ENCODE measurements at regions of chr2 and their contacts with region 1.

Region 1: DNA sequence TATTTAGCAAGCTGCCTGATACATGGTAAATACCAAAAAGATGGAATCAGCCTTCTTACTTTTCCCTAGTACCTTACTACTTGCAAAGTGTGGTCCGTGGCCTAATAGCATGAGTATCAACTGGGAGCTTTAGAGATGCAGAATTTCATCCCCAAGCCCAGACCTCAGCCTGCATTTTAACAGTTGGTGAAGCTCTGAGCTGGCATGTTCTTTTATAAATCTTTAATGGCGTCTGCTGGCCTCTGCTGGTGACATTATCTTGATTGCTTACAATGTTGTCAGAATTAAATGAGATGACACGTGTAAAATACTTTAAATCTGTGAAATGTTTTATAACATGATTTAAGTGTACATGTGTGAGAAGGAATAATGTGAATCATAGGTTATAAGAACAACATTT is 115.1 kb upstream of the NOSTRIN start:
- DNase-seq: peak; percentile 13
- H3K4me3 Mint-ChIP-seq: no peak overlapping the region
- H3K27ac Mint-ChIP-seq: no peak overlapping the region
- H3K4me1 Mint-ChIP-seq: no peaks in the 10 kb centered on the region
- H3K27me3 Mint-ChIP-seq: no peaks in the 10 kb centered on the region
- CTCF ChIP-seq: no peak

Region 2: DNA sequence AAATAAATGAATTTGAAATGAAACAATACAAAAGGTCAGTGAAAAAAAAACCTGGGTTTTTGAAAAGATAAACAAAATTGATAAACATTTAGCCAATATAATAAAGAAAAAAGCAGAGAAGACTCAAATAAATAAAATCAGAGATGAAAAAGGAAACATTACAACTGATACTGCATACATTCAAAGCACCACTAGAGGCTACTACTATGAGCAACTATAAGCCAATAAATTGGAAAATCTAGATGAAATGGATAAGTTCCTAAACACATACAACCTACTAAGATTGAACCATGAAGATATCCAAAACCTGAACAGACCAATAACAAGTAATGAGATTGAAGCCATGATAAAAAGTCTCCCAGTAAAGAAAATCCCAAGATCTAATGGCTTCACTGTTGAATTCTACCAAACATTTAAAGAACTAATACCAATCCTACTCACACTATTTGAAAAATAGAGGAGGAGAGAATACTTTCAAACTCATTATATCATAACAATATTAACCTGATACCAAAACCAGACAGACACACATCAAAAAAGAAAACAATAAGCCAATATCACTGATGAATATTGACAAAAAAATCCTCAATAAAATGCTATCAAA is 312.0 kb before region 1 on chr2:
- CTCF ChIA-PET with region 1: no interaction called
- intact Hi-C with region 1: loop called (anchors 5 kb)
- DNase-seq: no peak
- H3K4me3 Mint-ChIP-seq: no peak overlapping the region
- H3K27ac Mint-ChIP-seq: no peak overlapping the region
- H3K4me1 Mint-ChIP-seq: no peaks in the 10 kb centered on the region
- H3K27me3 Mint-ChIP-seq: no peaks in the 10 kb centered on the region
- CTCF ChIP-seq: no peak

Region 3: DNA sequence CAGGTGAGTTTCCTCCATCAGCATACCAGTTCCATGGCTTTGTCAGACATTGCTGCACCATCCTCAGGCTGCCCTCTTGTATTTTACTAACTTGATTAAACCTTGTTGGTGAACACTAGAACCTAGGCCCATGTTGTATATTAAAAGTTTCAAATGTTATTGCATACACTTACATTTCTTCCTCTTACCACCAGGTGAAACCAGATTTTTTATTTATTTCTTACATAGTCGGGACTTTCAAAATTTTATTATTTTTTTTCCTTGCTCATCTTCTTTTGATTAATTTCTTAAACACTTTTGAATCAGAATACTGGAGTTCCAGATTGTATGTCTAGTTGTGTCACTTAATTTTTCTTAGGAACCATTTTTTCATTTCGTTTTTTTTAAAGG is 225.4 kb before region 1 on chr2:
- CTCF ChIA-PET with region 1: no interaction called
- intact Hi-C with region 1: loop called (anchors 5 kb)
- DNase-seq: no peak
- H3K4me3 Mint-ChIP-seq: no peak overlapping the region
- H3K27ac Mint-ChIP-seq: no peak overlapping the region
- H3K4me1 Mint-ChIP-seq: peaks cover 39% of the 10 kb centered on the region
- H3K27me3 Mint-ChIP-seq: no peaks in the 10 kb centered on the region
- CTCF ChIP-seq: no peak

Region 4: GRCh38 chr2:168705534-168706470 is 18.5 kb after region 1 on chr2:
- CTCF ChIA-PET with region 1: no interaction called
- intact Hi-C with region 1: no loop called
- DNase-seq: no peak
- H3K4me3 Mint-ChIP-seq: no peak overlapping the region
- H3K27ac Mint-ChIP-seq: no peak overlapping the region
- H3K4me1 Mint-ChIP-seq: peaks cover 17% of the 10 kb centered on the region
- H3K27me3 Mint-ChIP-seq: no peaks in the 10 kb centered on the region
- CTCF ChIP-seq: no peak

Region 5: GRCh38 chr2:168758970-168759820 is 71.9 kb after region 1 on chr2:
- CTCF ChIA-PET with region 1: no interaction called
- intact Hi-C with region 1: no loop called
- DNase-seq: peak; percentile 37
- H3K4me3 Mint-ChIP-seq: no peak overlapping the region
- H3K27ac Mint-ChIP-seq: no peak overlapping the region
- H3K4me1 Mint-ChIP-seq: peaks cover 8% of the 10 kb centered on the region
- H3K27me3 Mint-ChIP-seq: no peaks in the 10 kb centered on the region
- CTCF ChIP-seq: peak; percentile 49

Region 6: DNA sequence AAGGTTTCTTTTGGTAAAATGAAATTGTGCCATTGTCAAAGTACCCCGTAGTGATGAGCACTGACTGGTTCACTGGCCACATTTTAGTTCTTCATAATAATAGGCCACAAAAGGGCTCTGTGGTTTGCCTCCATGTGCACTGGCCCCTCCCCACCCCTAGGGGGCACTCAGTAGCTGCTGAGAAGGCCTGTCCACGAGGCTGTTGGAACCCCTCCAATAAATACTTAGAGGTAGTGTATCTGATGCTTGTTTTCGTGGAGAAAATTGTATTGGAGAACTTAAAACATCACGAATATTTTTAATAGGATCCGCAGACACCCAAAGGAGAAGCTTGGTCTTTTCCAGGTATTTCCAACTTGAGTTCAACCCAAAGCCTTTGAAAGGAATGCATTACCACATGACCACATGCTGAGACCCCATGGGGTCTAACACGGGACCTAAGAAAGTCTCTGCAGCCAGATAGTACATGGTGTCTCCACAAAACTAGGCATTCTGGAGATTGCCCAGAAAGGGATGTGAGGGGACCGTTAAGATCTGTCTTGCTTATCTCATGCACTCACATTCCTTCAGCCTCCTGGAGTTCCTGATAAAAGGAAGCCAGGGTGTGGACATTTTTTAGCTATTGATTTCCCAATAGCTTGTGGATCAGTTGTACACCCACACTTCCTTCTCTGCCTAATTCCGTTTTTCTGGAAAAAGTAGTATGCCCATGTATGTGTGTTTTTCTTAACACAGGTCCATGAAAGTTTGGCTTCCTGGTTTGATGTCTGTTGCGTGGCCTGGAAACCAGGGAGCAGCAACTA is 86.6 kb after region 1 on chr2:
- CTCF ChIA-PET with region 1: no interaction called
- intact Hi-C with region 1: no loop called
- DNase-seq: peak; percentile 85
- H3K4me3 Mint-ChIP-seq: no peak overlapping the region
- H3K27ac Mint-ChIP-seq: no peak overlapping the region
- H3K4me1 Mint-ChIP-seq: no peaks in the 10 kb centered on the region
- H3K27me3 Mint-ChIP-seq: no peaks in the 10 kb centered on the region
- CTCF ChIP-seq: peak; percentile 94

Measured in Calu3 (cell line).